ENCODE measurements at regions of chr2 and their contacts with region 1.

Region 1: GRCh38 chr2:19120941-19121750 is 237.3 kb downstream of the OSR1 start:
- DNase-seq: no peak
- H3K4me3 ChIP-seq: no peak overlapping the region
- H3K27ac ChIP-seq: no peak overlapping the region
- H3K4me1 ChIP-seq: peaks cover 10% of the 10 kb centered on the region
- H3K27me3 ChIP-seq: no peaks in the 10 kb centered on the region
- CTCF ChIP-seq: no peak
- POLR2A ChIP-seq: no peak

Region 2: GRCh38 chr2:19138322-19138721 is 17.2 kb after region 1 on chr2:
- CTCF ChIA-PET with region 1: interaction called, 10 read pairs
- POLR2A ChIA-PET with region 1: no interaction called
- dilution Hi-C with region 1: no loop called
- intact Hi-C with region 1: no loop called
- DNase-seq: no peak
- H3K4me3 ChIP-seq: no peak overlapping the region
- H3K27ac ChIP-seq: no peak overlapping the region
- H3K4me1 ChIP-seq: peaks cover 19% of the 10 kb centered on the region
- H3K27me3 ChIP-seq: no peaks in the 10 kb centered on the region
- CTCF ChIP-seq: no peak
- POLR2A ChIP-seq: no peak